Testis (tissue), 5 donors: ENCODE measurements at regions of chr1 and their contacts with region 1.

Region 1: DNA sequence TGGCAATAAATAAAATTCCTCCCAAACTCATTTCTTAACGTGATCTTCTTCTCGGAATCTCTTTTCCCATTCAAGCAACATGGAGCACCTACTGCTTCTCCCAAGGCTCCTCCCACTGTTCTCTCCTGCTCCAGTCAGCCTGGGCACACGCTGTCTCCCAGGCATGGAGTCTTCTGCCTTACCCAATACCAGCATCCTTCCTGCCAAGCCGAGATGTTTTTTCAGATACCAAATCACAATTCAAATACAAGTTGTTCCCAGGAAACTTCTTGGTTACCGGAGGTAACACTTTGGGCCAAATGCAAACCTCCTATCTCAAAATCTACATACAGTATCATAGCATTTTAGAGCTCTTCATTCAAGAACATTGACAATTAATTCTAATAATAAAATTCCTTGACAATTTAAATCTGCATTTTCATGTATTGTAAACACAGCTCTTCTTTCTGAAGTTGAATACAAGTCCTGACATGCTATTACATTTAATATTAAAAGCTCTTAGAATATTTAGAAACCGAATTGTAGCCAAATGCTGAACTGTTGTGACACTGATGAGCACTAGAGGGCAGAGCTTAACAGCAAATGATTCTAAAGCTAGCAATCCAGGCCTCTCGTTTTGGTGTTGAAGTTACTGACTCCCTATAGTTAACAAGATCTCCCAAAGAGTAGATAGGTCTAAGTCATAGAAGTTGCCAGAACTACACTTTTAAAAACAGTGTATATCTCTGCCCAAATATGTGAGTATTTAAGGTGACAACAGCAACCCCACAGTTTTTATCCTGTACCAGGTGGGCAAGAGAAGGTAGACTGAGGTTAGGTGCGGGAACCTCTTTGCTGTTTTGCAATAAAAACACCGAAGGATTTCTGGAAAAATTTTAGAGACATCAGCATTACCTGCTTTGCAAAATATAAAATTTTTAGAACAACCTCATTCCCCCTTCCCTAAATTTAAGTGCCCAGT is 52.3 kb downstream of the BCAR3 start:
- DNase-seq: peak; percentile 64
- H3K4me3 ChIP-seq: no peak overlapping the region
- H3K27ac ChIP-seq: peak overlapping the region in 1 of 2 donors; percentile 23
- H3K4me1 ChIP-seq: peaks cover 7% of the 10 kb centered on the region
- H3K27me3 ChIP-seq: no peaks in the 10 kb centered on the region
- CTCF ChIP-seq: peak; percentile 71 to 86 (median 82)
- POLR2A ChIP-seq: no peak

Region 2: DNA sequence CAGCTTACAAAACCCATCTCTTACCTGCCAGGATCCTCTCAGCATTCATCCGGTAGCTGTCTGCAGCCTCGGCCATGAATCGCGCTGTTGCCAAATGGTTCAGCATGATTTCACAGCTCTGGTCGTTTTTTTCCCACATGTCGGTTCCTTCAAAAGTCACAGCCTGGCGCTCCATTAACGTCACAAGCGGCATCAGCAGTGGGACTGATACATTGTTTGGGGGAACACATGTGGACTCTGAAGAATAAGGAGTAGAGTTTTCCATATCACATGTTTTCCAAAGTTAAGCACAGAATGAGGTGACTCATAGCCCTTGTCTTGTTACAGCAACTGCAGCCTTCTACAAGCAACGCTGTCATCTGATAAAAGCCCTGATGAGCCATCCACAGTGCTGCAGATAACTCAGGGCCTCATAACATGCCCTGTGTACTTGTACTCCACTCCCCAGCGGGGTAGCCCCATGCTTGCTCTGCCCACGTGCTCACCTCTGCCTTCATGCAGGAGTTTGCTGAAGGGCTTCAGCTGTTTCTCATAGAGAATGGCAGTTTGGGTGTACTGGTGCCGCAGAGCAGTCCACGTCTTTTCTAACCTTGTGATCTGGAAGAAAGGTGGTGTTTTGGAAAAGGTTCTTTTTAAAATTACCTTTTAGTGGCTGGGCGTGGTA is 62.0 kb before region 1 on chr1:
- intact Hi-C with region 1: no loop called
- DNase-seq: peak; percentile 88
- H3K4me3 ChIP-seq: no peak overlapping the region
- H3K27ac ChIP-seq: peak overlapping the region; percentile 42 to 78
- H3K4me1 ChIP-seq: peaks cover 2% of the 10 kb centered on the region
- H3K27me3 ChIP-seq: no peaks in the 10 kb centered on the region
- CTCF ChIP-seq: no peak
- POLR2A ChIP-seq: no peak

Region 3: DNA sequence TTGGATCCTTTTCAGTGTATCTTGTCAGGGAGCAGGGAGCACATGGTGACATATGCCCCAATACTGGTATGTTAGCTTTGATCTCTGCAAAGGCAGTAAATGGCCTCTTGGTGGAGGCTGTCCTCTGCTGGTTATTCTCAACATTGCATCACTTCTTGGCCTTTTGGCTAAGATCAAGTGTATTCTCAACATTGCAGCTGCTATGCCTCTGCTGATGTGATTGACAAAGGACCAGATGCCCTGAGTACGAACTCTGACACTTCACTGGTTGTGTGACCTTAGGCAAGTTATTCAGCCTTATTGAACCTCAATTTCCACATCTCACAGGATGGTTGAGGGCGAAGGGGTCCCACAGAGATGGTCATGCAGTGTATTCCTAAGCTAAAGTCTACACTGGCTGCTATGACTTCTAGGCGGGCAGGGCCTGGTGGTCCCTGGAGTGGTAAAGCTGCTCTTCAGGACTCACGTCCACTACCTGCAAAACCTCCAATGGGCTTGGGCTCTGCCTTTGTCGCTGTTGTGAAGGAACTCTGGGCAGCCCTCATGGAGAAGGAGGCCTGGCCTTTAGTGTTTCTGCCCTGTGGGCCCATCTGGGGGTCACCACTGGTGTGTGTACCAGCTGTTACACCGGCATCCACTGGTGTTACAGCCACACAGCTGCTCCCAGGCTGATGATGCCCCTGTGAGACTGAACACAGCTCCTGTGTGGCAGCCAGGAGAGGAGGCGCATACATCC is 184.8 kb after region 1 on chr1:
- intact Hi-C with region 1: loop called (anchors 10 kb)
- DNase-seq: peak; percentile 82
- H3K4me3 ChIP-seq: no peak overlapping the region
- H3K27ac ChIP-seq: no peak overlapping the region
- H3K4me1 ChIP-seq: peaks cover 23% of the 10 kb centered on the region
- H3K27me3 ChIP-seq: no peaks in the 10 kb centered on the region
- CTCF ChIP-seq: peak; percentile 88 to 98 (median 94)
- POLR2A ChIP-seq: no peak

Region 4: GRCh38 chr1:93846211-93846991 is 217.0 kb after region 1 on chr1:
- intact Hi-C with region 1: loop called (anchors 10 kb)
- DNase-seq: peak; percentile 93
- H3K4me3 ChIP-seq: peak overlapping the region; percentile 79 to 93
- H3K27ac ChIP-seq: peak overlapping the region; percentile 95 to 99
- H3K4me1 ChIP-seq: peaks cover 44% of the 10 kb centered on the region
- H3K27me3 ChIP-seq: no peaks in the 10 kb centered on the region
- CTCF ChIP-seq: peak; percentile 20 to 46 (median 35)
- POLR2A ChIP-seq: no peak